PC-9 (cell line): ENCODE measurements at regions of chr5 and their contacts with region 1.

Region 1: DNA sequence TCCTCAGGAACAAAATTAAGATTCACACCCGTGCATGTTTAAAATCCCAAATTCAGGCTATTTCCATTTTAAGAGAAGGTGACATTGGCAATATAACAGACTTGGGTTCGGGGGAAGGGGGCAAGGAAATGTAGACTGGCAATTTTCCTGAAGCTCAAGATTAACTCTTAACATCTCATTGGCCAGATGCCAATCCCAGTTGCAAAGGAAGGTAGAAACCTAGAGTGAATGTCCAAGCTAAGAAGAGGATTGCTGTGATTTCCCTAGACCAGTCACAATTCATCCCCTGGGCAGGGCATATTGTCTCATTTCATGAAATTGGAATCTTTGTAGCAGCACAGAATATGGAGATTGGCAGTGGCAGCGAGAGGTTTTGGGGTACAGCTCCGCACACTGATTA is 9.5 kb upstream of the FBLL1 start:
- DNase-seq: no peak
- H3K4me3 ChIP-seq: no peak overlapping the region
- H3K27ac ChIP-seq: no peak overlapping the region
- H3K4me1 ChIP-seq: no peaks in the 10 kb centered on the region
- H3K27me3 ChIP-seq: no peaks in the 10 kb centered on the region
- CTCF ChIP-seq: no peak

Region 2: GRCh38 chr5:167489202-167489601 is 1030.4 kb before region 1 on chr5:
- CTCF ChIA-PET with region 1: no interaction called
- POLR2A ChIA-PET with region 1: no interaction called
- intact Hi-C with region 1: no loop called
- DNase-seq: no peak
- H3K4me3 ChIP-seq: no peak overlapping the region
- H3K27ac ChIP-seq: no peak overlapping the region
- H3K4me1 ChIP-seq: no peaks in the 10 kb centered on the region
- H3K27me3 ChIP-seq: peaks cover 7% of the 10 kb centered on the region; the same call in 1 of the 2 replicates
- CTCF ChIP-seq: no peak

Region 3: GRCh38 chr5:168502563-168503237 is 16.9 kb before region 1 on chr5:
- CTCF ChIA-PET with region 1: no interaction called
- POLR2A ChIA-PET with region 1: no interaction called
- intact Hi-C with region 1: no loop called
- DNase-seq: no peak
- H3K4me3 ChIP-seq: no peak overlapping the region
- H3K27ac ChIP-seq: no peak overlapping the region
- H3K4me1 ChIP-seq: no peaks in the 10 kb centered on the region
- H3K27me3 ChIP-seq: no peaks in the 10 kb centered on the region
- CTCF ChIP-seq: no peak

Region 4: DNA sequence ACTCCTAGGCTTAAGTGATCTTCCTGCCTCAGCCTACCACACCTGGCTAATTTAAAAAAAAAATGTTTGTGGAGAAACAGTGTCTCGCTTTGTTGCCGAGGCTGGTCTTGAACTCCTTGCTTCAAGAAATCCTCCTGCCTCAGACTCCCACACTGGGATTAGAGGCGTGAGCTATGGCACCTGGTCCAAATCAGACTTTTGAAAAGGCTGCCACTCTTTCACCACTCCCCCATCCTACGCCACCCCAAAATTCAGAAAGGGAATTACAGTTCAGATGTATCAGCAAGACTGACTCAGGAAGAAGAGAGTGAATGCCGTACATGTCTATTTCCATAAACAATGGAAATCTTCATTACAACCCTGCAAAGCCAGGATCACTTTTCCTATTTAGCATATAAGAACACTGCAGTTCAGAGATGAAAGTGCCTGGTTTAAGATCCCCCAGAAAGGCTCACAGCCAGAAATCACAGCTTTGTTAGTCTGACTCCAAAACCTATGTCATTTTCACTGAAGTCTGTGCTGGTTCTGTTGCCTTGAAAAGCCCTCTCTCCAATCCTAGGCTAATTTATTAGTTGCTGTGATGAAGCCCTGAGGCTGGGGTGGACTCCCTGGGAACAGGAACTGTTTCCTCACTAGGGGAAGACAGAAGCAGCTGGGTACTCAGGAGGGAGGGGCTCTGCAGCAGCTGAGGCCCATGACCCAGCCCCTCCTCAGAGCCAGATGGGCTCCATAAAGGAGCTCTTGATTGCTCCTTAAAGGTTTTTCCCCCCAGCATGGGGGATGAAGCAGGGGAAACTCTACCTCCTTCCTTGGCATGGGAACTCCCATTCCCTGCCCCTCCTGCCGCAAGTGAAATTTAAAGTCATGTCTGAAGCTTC is 12.6 kb after region 1 on chr5:
- CTCF ChIA-PET with region 1: no interaction called
- POLR2A ChIA-PET with region 1: no interaction called
- intact Hi-C with region 1: no loop called
- DNase-seq: no peak
- H3K4me3 ChIP-seq: no peak overlapping the region
- H3K27ac ChIP-seq: no peak overlapping the region
- H3K4me1 ChIP-seq: no peaks in the 10 kb centered on the region
- H3K27me3 ChIP-seq: 0 out of 2 replicates have a peak, but pooled peaks cover 4% of the 10 kb centered on the region
- CTCF ChIP-seq: no peak

Region 5: DNA sequence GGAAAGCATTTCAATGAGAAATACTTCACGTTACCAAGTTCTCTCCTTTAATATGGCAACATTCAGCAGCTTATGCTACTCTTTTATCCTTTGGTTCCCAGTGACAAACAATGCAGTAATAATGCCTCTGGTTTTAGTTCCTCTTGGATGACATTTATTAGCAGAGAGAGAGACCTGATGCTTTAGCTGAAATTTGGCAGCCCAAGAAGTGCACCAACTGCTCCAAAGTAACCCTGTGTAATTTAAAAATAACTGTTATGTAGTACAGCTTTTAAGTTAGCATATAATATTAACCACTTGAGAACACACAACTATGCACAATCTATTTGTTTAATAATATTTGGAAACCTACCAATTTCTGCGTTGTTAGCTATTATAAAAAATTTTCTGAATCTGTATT is 37.7 kb after region 1 on chr5:
- CTCF ChIA-PET with region 1: no interaction called
- POLR2A ChIA-PET with region 1: no interaction called
- intact Hi-C with region 1: loop called (anchors 5 kb)
- DNase-seq: no peak
- H3K4me3 ChIP-seq: no peak overlapping the region
- H3K27ac ChIP-seq: no peak overlapping the region
- H3K4me1 ChIP-seq: no peaks in the 10 kb centered on the region
- H3K27me3 ChIP-seq: no peaks in the 10 kb centered on the region
- CTCF ChIP-seq: no peak